PC-3 (cell line): ENCODE measurements at regions of chr20 and their contacts with region 1.

Region 1: GRCh38 chr20:41339507-41340326 is 904 bp upstream of the LPIN3 start:
- DNase-seq: peak; percentile 94
- ATAC-seq: peak; percentile 77
- H3K4me3 ChIP-seq: peak overlapping the region; percentile 72
- H3K27ac ChIP-seq: no peak overlapping the region
- H3K4me1 ChIP-seq: peaks cover 15% of the 10 kb centered on the region
- H3K27me3 ChIP-seq: no peaks in the 10 kb centered on the region
- CTCF ChIP-seq: peak; percentile 97

Region 2: DNA sequence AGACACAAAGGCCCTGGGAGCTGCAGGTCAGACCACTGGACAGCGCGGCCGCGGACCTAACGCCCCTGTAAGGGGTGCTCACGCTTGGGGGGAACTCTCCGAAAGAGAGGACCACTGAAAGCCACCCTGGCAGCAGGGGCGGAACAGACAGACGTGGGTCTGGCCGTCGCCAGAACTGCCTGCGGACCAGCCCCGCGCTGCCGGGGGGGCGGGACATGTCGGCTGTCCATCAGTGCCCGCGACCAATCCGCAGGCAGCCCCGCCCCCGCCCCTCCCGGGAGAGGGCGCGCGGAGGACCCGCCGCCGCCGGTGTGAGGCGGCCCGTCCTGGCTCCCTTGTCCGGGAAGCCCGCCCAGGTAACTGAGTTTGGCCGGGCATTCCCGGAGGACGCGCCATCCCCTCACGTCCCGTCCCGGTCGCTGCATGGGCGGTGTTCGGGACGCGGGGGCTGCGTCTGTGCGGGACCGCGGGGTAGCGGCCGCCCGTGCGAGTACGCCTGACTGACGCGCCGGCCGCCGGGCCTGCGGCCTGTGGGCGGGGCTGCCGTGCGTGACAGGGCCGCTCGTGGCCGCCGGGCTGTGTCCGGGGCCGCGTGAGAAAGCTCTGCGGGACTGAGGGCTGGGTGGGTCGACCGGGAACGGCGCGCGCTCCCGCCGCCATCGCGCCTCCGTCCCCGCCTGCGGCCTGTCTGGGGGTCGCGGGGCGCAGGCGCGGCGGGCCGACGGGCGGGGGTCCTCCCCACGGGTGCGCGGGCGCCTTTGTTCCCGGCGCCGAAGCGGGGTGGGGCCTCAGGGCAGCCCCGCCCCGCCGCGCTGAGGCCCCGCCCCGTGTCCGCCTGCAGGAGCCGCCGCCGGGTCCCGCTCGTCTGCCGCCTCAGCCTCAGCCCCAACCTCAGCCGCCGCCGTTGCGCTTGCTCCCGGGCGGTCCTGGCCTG is 202.8 kb before region 1 on chr20 and contains the start of gene PLCG1:
- CTCF ChIA-PET with region 1: interaction called, 5 read pairs
- POLR2A ChIA-PET with region 1: interaction called, 15 read pairs
- intact Hi-C with region 1: loop called (anchors 1 kb)
- DNase-seq: peak; percentile 85
- ATAC-seq: peak; percentile 78
- H3K4me3 ChIP-seq: peak within 1 kb of the TSS; percentile 92
- H3K27ac ChIP-seq: peak within 1 kb of the TSS; percentile 34
- H3K4me1 ChIP-seq: peaks cover 21% of the 10 kb centered on the region
- H3K27me3 ChIP-seq: no peaks in the 10 kb centered on the region
- CTCF ChIP-seq: no peak
- total RNA-seq, gene PLCG1: 68.8 and 112 TPM in 2 replicates

Region 3: DNA sequence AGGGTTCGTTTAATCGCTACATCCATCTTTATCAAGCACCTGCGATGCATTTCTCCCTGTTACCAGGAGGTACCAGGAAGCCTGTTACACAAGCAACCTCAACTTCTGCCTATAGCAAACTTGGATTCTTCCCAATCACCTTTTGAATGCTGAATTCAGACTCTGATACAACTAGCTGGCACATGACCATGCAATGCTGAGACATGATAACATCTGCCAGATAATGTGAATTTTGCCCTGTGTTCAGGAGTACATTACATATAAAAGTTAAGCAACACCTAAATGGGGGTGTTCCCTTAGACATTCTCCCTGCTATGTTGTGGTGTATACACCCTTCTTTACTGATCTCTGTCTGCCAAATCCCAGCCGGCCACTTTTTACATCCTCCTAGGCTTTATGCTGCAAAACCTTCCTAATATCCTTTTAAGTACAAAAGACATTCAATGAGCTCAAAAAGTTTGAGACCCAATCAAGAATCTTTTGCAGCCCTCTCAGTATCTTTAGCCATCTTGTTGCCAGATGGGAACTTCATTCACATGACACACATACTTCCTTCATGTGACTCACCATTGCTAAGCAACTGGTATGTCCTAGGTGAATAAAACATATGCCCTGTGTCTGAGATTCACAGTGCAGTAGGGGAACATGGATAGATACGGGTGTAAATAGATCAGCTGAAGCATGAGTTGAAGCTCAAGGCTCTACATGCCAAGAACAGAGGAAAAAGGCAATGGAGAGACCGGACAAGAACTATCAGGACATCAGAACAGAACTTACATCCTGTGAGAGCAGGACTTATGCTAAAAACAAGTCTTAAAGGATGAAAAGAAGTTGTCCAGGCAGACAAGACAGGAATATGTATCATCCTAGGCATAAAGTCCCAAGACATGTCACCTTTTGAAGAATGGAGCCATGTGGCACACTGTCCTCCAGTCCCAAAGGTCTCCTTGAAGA is 106.5 kb before region 1 on chr20:
- CTCF ChIA-PET with region 1: interaction called, 11 read pairs
- POLR2A ChIA-PET with region 1: no interaction called
- intact Hi-C with region 1: loop called (anchors 1 kb)
- DNase-seq: peak; percentile 79
- ATAC-seq: peak; percentile 72
- H3K4me3 ChIP-seq: no peak overlapping the region; the same call in 1 of the 2 replicates
- H3K27ac ChIP-seq: peak overlapping the region; percentile 10; the same call in 1 of the 2 replicates
- H3K4me1 ChIP-seq: peaks cover 32% of the 10 kb centered on the region
- H3K27me3 ChIP-seq: no peaks in the 10 kb centered on the region
- CTCF ChIP-seq: no peak

Region 4: DNA sequence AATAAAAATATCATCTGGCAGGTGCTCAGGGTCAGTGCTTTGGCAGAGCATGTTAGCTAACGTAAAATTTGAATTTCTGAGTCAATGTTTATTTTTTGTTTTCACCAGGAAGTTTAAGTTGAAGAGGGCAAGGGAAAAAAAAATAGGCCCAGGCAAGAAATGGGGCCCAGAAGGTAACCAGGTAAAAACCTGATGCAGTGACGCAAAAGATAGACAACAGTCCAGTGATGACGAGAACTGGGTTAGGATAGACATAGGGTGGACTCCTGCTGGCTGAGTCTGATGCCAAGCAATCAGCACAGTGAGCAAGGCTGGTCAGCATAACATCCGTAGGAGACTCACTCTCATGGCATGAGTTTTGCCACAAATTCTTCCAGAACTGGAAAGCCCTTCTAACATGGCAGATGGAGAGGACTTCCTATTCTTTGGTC is 64.4 kb before region 1 on chr20:
- CTCF ChIA-PET with region 1: interaction called, 10 read pairs
- POLR2A ChIA-PET with region 1: interaction called, 7 read pairs
- intact Hi-C with region 1: no loop called
- DNase-seq: peak; percentile 69
- ATAC-seq: peak; percentile 84
- H3K4me3 ChIP-seq: peak overlapping the region; percentile 36
- H3K27ac ChIP-seq: peak overlapping the region; percentile 57
- H3K4me1 ChIP-seq: peaks cover 21% of the 10 kb centered on the region
- H3K27me3 ChIP-seq: no peaks in the 10 kb centered on the region
- CTCF ChIP-seq: no peak

Region 5: GRCh38 chr20:41329435-41330342 is 10.0 kb before region 1 on chr20:
- CTCF ChIA-PET with region 1: interaction called, 16 read pairs
- POLR2A ChIA-PET with region 1: interaction called, 37 read pairs
- intact Hi-C with region 1: no loop called
- DNase-seq: peak; percentile 96
- ATAC-seq: peak; percentile 99
- H3K4me3 ChIP-seq: peak overlapping the region; percentile 1; the same call in 1 of the 2 replicates
- H3K27ac ChIP-seq: peak overlapping the region; percentile 74
- H3K4me1 ChIP-seq: peaks cover 16% of the 10 kb centered on the region
- H3K27me3 ChIP-seq: no peaks in the 10 kb centered on the region
- CTCF ChIP-seq: no peak

Region 6: GRCh38 chr20:41617931-41618806 is 278.5 kb after region 1 on chr20 and contains the start of gene CHD6:
- CTCF ChIA-PET with region 1: interaction called, 7 read pairs
- POLR2A ChIA-PET with region 1: no interaction called
- intact Hi-C with region 1: loop called (anchors 5 kb)
- DNase-seq: peak; percentile 100
- ATAC-seq: peak; percentile 97
- H3K4me3 ChIP-seq: peak within 1 kb of the TSS; percentile 80
- H3K27ac ChIP-seq: no peak within 1 kb of the TSS
- H3K4me1 ChIP-seq: peaks cover 15% of the 10 kb centered on the region
- H3K27me3 ChIP-seq: no peaks in the 10 kb centered on the region
- CTCF ChIP-seq: no peak
- total RNA-seq, gene CHD6: 19.5 and 34.7 TPM in 2 replicates